Naive thymus-derived CD8-positive, alpha-beta T cell (primary cell): ENCODE measurements at regions of chr17 and their contacts with region 1.

Region 1: DNA sequence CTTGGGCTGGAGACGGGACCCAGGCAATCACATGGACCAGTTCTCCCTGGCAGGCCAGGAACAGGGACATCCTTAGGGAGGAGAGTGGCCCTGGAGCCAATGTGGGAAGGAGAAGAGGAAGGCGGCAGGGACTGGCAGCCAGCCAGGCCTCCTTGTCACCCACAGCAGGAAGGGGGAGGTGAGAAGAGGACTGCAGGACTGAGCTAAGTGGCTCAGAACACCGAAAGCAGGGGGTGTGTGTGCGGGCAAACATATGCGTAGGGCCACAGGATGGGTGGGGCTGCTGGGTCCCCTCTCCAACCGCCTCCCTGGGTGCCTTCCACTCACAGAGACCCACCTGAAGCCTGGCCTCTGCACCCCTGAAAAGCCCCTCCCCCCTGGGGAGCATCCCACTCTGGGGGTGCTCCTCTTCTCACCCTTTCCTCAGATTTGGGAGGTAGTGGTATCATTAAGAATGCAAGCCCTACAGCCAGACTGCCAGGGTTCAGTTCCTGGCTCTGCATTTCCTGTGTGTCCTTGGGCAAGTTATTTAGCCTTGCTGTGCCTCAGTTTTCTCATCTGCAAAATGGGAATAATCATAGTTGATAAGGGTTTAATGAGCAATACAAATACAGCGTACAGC is 8.1 kb downstream of the PNMT start:
- DNase-seq: peak in 9 of 10 donors; percentile 26 to 83 (median 62)
- ATAC-seq: peak; percentile 70 to 82
- H3K4me3 Mint-ChIP-seq: peak overlapping the region in 9 of 10 donors; percentile 21 to 76 (median 63)
- H3K27ac Mint-ChIP-seq: peak overlapping the region; percentile 66 to 99 (median 94)
- H3K4me1 Mint-ChIP-seq: peaks cover 33 to 76% (median 71%) of the 10 kb centered on the region in 4 donors
- H3K27me3 Mint-ChIP-seq: peaks cover 0 to 2% (median 0%) of the 10 kb centered on the region in 5 donors

Region 2: GRCh38 chr17:39659279-39660010 is 16.9 kb before region 1 on chr17:
- POLR2A ChIA-PET with region 1: interaction called, 19 read pairs
- DNase-seq: peak in 3 of 10 donors; percentile 32 to 53 (median 45)
- ATAC-seq: peak; percentile 55 to 59
- H3K4me3 Mint-ChIP-seq: peak overlapping the region; percentile 68 to 86 (median 74)
- H3K27ac Mint-ChIP-seq: peak overlapping the region; percentile 74 to 96 (median 94)
- H3K4me1 Mint-ChIP-seq: peaks cover 26 to 66% (median 60%) of the 10 kb centered on the region in 4 donors
- H3K27me3 Mint-ChIP-seq: no peaks in the 10 kb centered on the region

Region 3: GRCh38 chr17:39687811-39688518 is 11.7 kb after region 1 on chr17 and contains the start of gene PGAP3:
- POLR2A ChIA-PET with region 1: interaction called, 22 read pairs
- DNase-seq: peak; percentile 73 to 92 (median 80)
- ATAC-seq: peak; percentile 89 to 93
- H3K4me3 Mint-ChIP-seq: peak within 1 kb of the TSS; percentile 97 to 99 (median 98)
- H3K27ac Mint-ChIP-seq: peak within 1 kb of the TSS; percentile 97 to 99 (median 98)
- H3K4me1 Mint-ChIP-seq: peaks cover 23 to 35% (median 30%) of the 10 kb centered on the region in 4 donors
- H3K27me3 Mint-ChIP-seq: no peaks in the 10 kb centered on the region
- polyA plus RNA-seq, gene PGAP3: 14.2 to 17.7 (median 15.5) TPM